ENCODE measurements at regions of chr4 and their contacts with region 1.

Region 1: DNA sequence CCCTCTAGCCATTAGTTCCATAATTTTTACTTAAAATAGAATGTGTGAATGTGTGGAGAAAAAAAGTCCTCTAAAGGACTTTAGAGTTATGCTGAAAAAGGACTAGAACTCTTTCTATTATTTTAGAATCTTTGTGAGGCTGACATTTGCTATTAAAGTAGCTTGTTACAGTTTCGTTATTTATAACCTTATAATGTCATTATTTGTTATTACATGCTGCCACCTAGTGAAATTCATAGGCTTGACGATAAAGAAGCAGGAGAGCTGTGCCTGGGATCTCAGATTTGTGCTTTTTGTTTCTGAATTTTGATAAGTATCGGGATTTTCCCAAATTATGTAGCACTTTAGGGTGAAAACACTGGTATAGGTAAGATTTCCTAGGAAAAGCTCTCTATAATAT is 38.5 kb upstream of the TAPT1 start:
- DNase-seq: no peak
- ATAC-seq: peak; percentile 57
- H3K4me3 Mint-ChIP-seq: no peak overlapping the region
- H3K27ac Mint-ChIP-seq: no peak overlapping the region
- H3K4me1 Mint-ChIP-seq: peaks cover 8% of the 10 kb centered on the region
- H3K27me3 Mint-ChIP-seq: no peaks in the 10 kb centered on the region

Region 2: GRCh38 chr4:16026160-16026761 is 238.5 kb before region 1 on chr4:
- CTCF ChIA-PET with region 1: interaction called, 20 read pairs
- DNase-seq: no peak
- ATAC-seq: no peak
- H3K4me3 Mint-ChIP-seq: no peak overlapping the region
- H3K27ac Mint-ChIP-seq: no peak overlapping the region
- H3K4me1 Mint-ChIP-seq: peaks cover 15% of the 10 kb centered on the region
- H3K27me3 Mint-ChIP-seq: peaks cover 21% of the 10 kb centered on the region